CD8-positive, alpha-beta memory T cell (primary cell): ENCODE measurements at regions of chr15 and their contacts with region 1.

Region 1: DNA sequence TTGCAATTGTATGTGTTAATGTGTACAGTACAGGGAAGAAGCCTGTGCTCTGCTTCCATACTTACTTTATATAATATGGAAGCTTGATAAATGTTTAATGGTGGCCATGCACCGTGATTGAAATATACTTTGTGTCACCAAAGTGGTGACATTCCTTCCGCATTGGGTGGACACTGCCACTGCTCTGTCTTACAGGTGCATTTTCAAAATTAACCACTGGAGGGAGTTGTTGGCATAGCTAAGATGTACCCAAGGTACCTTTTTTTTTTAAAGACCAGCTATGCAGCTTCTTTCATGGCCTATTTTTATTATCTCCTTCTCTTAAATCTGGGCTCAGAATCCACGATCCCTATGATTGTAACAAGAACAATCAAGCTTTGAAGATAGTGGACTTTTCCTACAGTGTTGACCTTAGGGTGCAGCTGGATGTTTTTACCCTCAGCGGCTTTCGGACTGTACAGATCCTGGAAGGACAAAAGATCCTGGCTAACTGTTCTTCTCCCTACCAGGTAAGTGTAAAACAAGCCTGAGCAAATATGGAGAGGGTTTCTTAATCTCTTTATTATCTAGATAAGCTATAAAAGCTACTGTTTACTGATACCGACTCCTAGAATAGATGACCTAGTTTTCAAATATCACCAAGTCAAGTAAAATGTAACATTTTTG is 21.6 kb upstream of the PAK6 start:
- DNase-seq: peak in 4 of 5 donors; percentile 13 to 64 (median 59)
- H3K4me3 ChIP-seq: no peak overlapping the region
- H3K4me3 Mint-ChIP-seq: no peak overlapping the region
- H3K27ac ChIP-seq: no peak overlapping the region
- H3K27ac Mint-ChIP-seq: no peak overlapping the region
- H3K4me1 ChIP-seq: no peaks in the 10 kb centered on the region
- H3K4me1 Mint-ChIP-seq: no peaks in the 10 kb centered on the region
- H3K27me3 ChIP-seq: no peaks in the 10 kb centered on the region
- H3K27me3 Mint-ChIP-seq: no peaks in the 10 kb centered on the region

Region 2: GRCh38 chr15:40044717-40045571 is 172.3 kb before region 1 on chr15:
- CTCF ChIA-PET with region 1: interaction called, 17 read pairs
- POLR2A ChIA-PET with region 1: no interaction called
- DNase-seq: peak; percentile 67 to 86 (median 72)
- H3K4me3 ChIP-seq: peak overlapping the region; percentile 9
- H3K4me3 Mint-ChIP-seq: peak overlapping the region in 6 of 7 donors; percentile 43 to 78 (median 63)
- H3K27ac ChIP-seq: no peak overlapping the region
- H3K27ac Mint-ChIP-seq: peak overlapping the region; percentile 21 to 83 (median 55)
- H3K4me1 ChIP-seq: peaks cover 57% of the 10 kb centered on the region
- H3K4me1 Mint-ChIP-seq: peaks cover 50 to 64% (median 60%) of the 10 kb centered on the region in 3 donors
- H3K27me3 ChIP-seq: no peaks in the 10 kb centered on the region
- H3K27me3 Mint-ChIP-seq: no peaks in the 10 kb centered on the region

Region 3: DNA sequence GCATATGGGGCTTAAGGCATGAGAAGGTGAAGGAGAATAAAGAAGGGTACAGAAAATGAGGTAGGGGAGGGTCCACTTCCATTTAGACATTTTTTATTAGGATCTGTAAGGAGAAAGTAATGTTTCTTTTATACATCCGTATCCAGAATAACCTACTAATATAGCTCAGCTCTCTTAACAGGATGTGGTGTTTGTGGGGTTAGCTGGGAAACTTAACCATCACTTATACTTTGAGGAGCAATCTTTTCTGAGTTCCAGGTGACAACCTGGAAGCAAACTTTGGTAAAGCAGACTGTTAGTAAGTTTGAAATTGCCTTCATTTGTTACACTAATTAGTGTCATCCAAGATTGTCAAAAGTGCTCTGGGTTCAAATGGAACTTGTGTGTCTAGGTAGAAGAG is 19.9 kb before region 1 on chr15:
- CTCF ChIA-PET with region 1: interaction called, 10 read pairs
- POLR2A ChIA-PET with region 1: no interaction called
- DNase-seq: peak in 2 of 5 donors; percentile 5 to 18
- H3K4me3 ChIP-seq: no peak overlapping the region
- H3K4me3 Mint-ChIP-seq: peak overlapping the region in 6 of 7 donors; percentile 45 to 78 (median 55)
- H3K27ac ChIP-seq: no peak overlapping the region
- H3K27ac Mint-ChIP-seq: peak overlapping the region in 6 of 8 donors; percentile 26 to 89 (median 50)
- H3K4me1 ChIP-seq: peaks cover 13% of the 10 kb centered on the region
- H3K4me1 Mint-ChIP-seq: peaks cover 24 to 45% (median 31%) of the 10 kb centered on the region in 3 donors
- H3K27me3 ChIP-seq: no peaks in the 10 kb centered on the region
- H3K27me3 Mint-ChIP-seq: no peaks in the 10 kb centered on the region

Region 4: DNA sequence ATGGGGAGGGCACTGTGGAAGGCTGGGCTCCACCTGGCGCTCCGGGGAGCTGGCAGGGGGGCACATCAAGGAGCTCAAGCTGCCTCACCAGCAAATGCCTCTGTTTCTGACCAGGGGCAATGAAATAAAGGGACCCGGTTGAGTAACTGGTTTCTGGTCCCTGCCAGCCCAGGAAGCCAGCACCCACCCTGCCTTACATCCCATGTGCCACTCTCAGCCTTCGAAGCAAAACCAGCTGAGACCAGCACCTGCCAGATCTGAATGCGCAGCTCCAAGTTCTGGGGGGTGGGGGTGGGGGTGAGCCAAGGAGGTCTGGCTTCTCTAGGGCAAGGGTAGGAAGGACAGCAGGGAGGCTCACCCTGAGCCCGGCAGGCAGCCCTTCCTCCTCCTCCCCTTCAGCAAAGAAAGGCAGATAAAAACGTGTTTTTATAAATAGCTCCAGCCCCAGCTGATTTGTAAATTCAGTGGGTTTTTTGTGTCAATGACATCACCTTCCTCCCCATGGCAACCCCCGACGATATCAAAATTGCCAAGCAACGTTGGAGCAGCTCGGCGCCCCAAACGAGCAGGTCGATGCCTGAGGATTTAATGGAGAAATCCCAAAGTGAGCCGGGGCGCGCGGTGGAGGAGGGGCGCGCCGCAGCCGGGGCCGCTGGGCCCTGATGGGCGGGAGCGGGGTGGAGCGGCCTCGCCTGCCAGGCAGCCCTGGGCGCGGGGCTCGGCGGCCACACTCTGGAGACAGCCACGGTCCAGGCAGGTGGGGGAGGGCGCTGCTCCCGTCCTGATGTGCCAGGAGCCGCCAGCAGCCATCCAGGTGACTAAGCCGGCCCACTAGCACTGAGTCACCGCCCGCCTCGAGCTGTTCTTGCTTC is 21.5 kb after region 1 on chr15 and contains the start of gene PAK6:
- CTCF ChIA-PET with region 1: interaction called, 12 read pairs
- POLR2A ChIA-PET with region 1: no interaction called
- DNase-seq: peak in 3 of 5 donors; percentile 13 to 44 (median 16)
- H3K4me3 ChIP-seq: no peak within 1 kb of the TSS
- H3K4me3 Mint-ChIP-seq: peak within 1 kb of the TSS in 3 of 7 donors; percentile 32 to 54 (median 53)
- H3K27ac ChIP-seq: no peak within 1 kb of the TSS
- H3K27ac Mint-ChIP-seq: peak within 1 kb of the TSS in 2 of 8 donors; percentile 29 to 37
- H3K4me1 ChIP-seq: peaks cover 5% of the 10 kb centered on the region
- H3K4me1 Mint-ChIP-seq: peaks cover 2 to 15% (median 6%) of the 10 kb centered on the region in 3 donors
- H3K27me3 ChIP-seq: peaks cover 3% of the 10 kb centered on the region
- H3K27me3 Mint-ChIP-seq: peaks cover 13 to 23% of the 10 kb centered on the region in 2 donors
- total RNA-seq, gene PAK6: 1.7 to 1.9 TPM

Region 5: GRCh38 chr15:40266828-40267304 is 49.6 kb after region 1 on chr15:
- CTCF ChIA-PET with region 1: interaction called, 103 read pairs
- POLR2A ChIA-PET with region 1: no interaction called
- DNase-seq: no peak
- H3K4me3 ChIP-seq: no peak overlapping the region
- H3K4me3 Mint-ChIP-seq: no peak overlapping the region
- H3K27ac ChIP-seq: no peak overlapping the region
- H3K27ac Mint-ChIP-seq: no peak overlapping the region
- H3K4me1 ChIP-seq: no peaks in the 10 kb centered on the region
- H3K4me1 Mint-ChIP-seq: no peaks in the 10 kb centered on the region
- H3K27me3 ChIP-seq: no peaks in the 10 kb centered on the region
- H3K27me3 Mint-ChIP-seq: peaks cover 0 to 1% of the 10 kb centered on the region in 2 donors